Activated naive CD4-positive, alpha-beta T cell treated with anti-CD3 and anti-CD28 coated beads for 36 hours (primary cell): ENCODE measurements at regions of chr7 and their contacts with region 1.

Region 1: GRCh38 chr7:142535123-142535779 is 214.0 kb upstream of the PRSS1 start:
- DNase-seq: peak; percentile 91
- H3K4me3 Mint-ChIP-seq: peak overlapping the region; percentile 64
- H3K27ac Mint-ChIP-seq: peak overlapping the region; percentile 86
- H3K4me1 Mint-ChIP-seq: peaks cover 29% of the 10 kb centered on the region
- H3K27me3 Mint-ChIP-seq: no peaks in the 10 kb centered on the region

Region 2: DNA sequence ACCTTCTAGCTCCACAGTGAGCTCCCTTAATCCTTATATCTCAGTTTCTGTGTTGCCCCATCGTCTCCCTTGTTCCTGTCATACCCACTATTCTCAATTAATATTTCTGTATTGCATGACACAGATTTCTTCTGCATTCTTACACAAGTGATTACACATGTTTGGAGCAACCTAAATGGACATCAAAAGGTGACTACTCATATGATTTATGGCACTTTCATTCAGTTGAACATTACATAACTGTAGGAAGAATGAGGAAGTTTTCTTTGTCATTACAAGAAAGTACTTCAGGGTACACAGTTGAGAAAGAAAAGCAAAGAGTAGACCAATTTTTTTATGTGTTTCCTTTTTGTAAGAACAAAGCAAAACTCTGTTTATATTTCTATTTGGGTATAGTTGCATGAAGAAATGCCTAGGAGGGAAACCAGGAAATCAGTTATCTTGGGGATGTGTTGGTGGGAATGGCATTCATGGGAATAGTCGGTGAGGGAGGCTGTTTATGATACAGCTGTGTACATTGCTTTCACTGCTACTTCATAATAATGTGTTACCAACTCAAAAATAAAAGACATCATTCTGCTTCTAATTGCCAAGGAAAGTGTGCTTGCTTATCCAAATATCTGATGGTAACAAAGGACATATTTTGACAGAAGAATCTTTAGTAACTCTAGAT is 670.3 kb before region 1 on chr7:
- CTCF ChIA-PET with region 1: no interaction called
- intact Hi-C with region 1: no loop called
- DNase-seq: no peak
- H3K4me3 Mint-ChIP-seq: no peak overlapping the region
- H3K27ac Mint-ChIP-seq: no peak overlapping the region
- H3K4me1 Mint-ChIP-seq: no peaks in the 10 kb centered on the region
- H3K27me3 Mint-ChIP-seq: no peaks in the 10 kb centered on the region

Region 3: DNA sequence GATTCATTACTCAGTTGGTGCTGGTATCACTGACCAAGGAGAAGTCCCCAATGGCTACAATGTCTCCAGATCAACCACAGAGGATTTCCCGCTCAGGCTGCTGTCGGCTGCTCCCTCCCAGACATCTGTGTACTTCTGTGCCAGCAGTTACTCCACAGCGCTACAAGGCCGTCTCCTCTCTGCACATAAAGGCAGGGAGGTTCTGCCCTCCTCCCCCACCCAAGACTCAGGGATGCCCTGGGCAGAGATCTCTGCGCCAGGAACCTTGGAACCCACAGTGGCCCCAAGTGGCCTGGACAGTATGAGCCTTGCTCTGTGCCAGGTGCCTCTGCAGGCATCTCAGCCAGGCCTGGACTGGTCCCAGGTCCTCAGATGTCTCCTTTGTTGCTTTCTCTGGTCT is 84.0 kb before region 1 on chr7:
- CTCF ChIA-PET with region 1: no interaction called
- intact Hi-C with region 1: no loop called
- DNase-seq: no peak
- H3K4me3 Mint-ChIP-seq: peak overlapping the region; percentile 25
- H3K27ac Mint-ChIP-seq: peak overlapping the region; percentile 46
- H3K4me1 Mint-ChIP-seq: peaks cover 24% of the 10 kb centered on the region
- H3K27me3 Mint-ChIP-seq: no peaks in the 10 kb centered on the region

Region 4: GRCh38 chr7:142496545-142497041 is 38.7 kb before region 1 on chr7:
- CTCF ChIA-PET with region 1: interaction called, 15 read pairs
- intact Hi-C with region 1: loop called (anchors 5 kb)
- DNase-seq: peak; percentile 40
- H3K4me3 Mint-ChIP-seq: peak overlapping the region; percentile 29
- H3K27ac Mint-ChIP-seq: peak overlapping the region; percentile 52
- H3K4me1 Mint-ChIP-seq: peaks cover 70% of the 10 kb centered on the region
- H3K27me3 Mint-ChIP-seq: no peaks in the 10 kb centered on the region

Region 5: GRCh38 chr7:142557971-142558582 is 22.8 kb after region 1 on chr7:
- CTCF ChIA-PET with region 1: interaction called, 26 read pairs
- intact Hi-C with region 1: loop called (anchors 1 kb)
- DNase-seq: peak; percentile 73
- H3K4me3 Mint-ChIP-seq: peak overlapping the region; percentile 58
- H3K27ac Mint-ChIP-seq: peak overlapping the region; percentile 79
- H3K4me1 Mint-ChIP-seq: peaks cover 8% of the 10 kb centered on the region
- H3K27me3 Mint-ChIP-seq: peaks cover 4% of the 10 kb centered on the region

Region 6: GRCh38 chr7:142603870-142604448 is 68.7 kb after region 1 on chr7:
- CTCF ChIA-PET with region 1: interaction called, 6 read pairs
- intact Hi-C with region 1: loop called (anchors 1 kb)
- DNase-seq: peak; percentile 71
- H3K4me3 Mint-ChIP-seq: no peak overlapping the region
- H3K27ac Mint-ChIP-seq: peak overlapping the region; percentile 68
- H3K4me1 Mint-ChIP-seq: peaks cover 6% of the 10 kb centered on the region
- H3K27me3 Mint-ChIP-seq: no peaks in the 10 kb centered on the region

Region 7: DNA sequence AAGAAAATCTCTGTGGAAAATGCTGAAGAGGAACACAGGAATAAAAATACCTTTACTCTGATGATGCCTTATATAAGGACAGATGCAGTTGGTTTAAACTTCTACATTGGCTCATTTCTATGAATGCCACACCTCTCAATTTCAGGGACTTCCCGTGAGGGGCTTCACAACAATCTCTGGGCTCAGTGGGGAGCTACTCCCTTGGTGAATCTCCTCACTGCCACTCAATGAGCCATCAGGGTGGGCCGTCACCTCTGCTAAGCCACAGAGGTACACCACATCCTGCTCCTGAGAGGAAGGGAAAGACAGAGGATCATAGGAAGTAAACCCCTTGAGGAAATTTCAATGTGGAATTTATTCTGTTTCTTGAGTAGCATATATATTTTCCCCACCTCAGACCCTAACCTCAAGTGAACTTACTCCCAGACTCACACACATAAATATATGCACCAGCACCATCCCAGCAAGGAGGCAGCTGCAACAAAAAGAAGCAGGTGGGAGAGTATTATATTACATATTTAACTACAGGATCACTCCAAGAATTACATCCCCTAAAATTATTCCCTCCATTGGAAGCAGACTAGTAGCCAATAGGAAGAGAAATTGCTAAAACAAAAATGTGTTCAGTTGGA is 150.7 kb after region 1 on chr7:
- CTCF ChIA-PET with region 1: no interaction called
- intact Hi-C with region 1: no loop called
- DNase-seq: no peak
- H3K4me3 Mint-ChIP-seq: no peak overlapping the region
- H3K27ac Mint-ChIP-seq: peak overlapping the region; percentile 30
- H3K4me1 Mint-ChIP-seq: peaks cover 20% of the 10 kb centered on the region
- H3K27me3 Mint-ChIP-seq: no peaks in the 10 kb centered on the region

Region 8: DNA sequence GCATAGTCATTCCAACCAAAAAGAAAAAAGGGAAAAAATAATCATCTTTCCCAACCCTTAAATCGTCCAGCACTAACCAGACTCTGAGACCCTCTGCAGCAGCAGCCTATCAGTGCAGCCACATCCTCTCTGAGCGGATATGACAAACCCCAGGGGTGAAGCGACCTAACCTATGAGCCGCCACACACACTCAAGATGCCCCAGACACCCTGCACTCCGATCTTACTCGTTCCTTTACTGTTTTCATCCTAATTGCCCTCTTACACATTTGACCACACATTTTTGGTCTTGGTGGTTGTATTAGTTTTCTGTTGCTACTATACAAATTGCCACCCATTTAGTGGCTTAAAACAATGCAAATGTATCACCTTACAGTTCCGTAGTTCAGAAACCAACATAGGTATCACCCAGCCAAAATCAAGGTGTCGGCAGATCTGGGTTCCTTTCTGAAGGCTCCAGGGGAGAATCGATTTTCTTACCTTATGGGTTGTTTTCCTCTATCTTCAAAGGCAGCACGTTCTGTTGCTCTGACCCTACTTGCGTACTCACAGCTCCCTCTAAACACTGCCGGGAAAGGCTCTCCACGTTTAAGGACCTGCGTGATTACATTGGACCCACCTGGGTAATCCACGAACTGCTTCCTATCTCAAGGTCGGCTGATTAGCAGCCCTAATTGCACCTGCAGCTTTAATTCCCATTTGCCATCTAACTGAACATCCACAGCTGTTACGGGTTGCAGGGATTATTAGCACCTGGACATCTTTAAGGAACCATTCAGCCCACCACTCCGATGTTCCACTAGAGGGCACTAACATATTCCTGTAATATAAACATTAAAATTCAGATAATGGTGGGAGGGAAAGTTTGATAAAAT is 176.7 kb after region 1 on chr7:
- CTCF ChIA-PET with region 1: no interaction called
- intact Hi-C with region 1: loop called (anchors 5 kb)
- DNase-seq: peak; percentile 51
- H3K4me3 Mint-ChIP-seq: peak overlapping the region; percentile 78
- H3K27ac Mint-ChIP-seq: peak overlapping the region; percentile 89
- H3K4me1 Mint-ChIP-seq: peaks cover 43% of the 10 kb centered on the region
- H3K27me3 Mint-ChIP-seq: no peaks in the 10 kb centered on the region

Region 9: DNA sequence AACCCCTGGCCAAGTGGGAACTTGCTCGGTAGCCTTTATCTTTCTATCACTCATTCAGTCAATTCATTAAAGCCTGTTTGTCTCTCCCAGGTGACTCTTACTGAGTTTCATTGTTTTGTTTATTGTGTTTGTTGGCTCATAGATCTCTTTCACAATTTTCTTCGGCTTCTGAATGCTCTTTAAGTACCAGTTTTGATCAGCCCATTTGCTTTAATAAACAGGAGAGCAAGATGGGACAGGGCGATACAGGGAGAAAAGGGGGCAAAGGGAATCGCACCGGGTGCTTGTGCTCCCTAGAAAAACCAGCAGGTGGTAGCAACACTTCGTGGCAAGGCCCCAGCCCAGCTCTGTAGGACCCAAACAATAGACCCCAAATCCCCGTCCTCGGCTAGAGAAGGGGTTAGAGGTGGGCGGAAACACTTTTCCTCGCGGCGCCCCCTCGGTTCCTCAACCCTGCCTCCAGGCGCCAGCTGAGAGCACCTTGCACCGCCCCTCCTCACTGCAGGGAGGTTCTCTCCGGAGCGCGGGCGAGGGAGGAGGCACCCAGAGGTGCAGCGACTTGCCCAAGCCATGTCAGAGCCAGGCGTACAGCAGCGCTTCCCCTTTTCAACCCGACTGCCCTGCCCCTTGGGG is 318.6 kb after region 1 on chr7:
- CTCF ChIA-PET with region 1: interaction called, 6 read pairs
- intact Hi-C with region 1: loop called (anchors 2 kb)
- DNase-seq: peak; percentile 74
- H3K4me3 Mint-ChIP-seq: peak overlapping the region; percentile 91
- H3K27ac Mint-ChIP-seq: peak overlapping the region; percentile 79
- H3K4me1 Mint-ChIP-seq: peaks cover 31% of the 10 kb centered on the region
- H3K27me3 Mint-ChIP-seq: no peaks in the 10 kb centered on the region

Region 10: DNA sequence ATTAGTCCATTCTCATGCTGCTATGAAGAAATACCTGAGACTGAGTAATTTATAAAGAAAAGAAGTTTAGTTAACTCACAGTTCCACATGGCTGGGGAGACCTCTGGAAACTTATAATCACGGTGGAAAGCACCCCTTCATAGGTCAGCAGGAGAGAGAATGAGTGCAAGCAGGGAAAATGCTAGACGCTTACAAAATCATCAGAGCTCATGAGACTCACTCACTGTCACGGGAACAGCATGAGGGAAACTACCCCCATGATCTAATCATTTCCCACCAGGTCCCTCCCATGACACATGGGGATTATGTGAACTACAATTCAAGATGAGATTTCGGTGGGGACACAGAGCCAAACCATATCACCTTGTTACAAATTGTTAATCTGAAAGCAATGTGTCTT is 663.8 kb after region 1 on chr7:
- CTCF ChIA-PET with region 1: no interaction called
- intact Hi-C with region 1: no loop called
- DNase-seq: no peak
- H3K4me3 Mint-ChIP-seq: no peak overlapping the region
- H3K27ac Mint-ChIP-seq: no peak overlapping the region
- H3K4me1 Mint-ChIP-seq: no peaks in the 10 kb centered on the region
- H3K27me3 Mint-ChIP-seq: peaks cover 6% of the 10 kb centered on the region